ENCODE measurements at regions of chr5 and their contacts with region 1.

Region 1: DNA sequence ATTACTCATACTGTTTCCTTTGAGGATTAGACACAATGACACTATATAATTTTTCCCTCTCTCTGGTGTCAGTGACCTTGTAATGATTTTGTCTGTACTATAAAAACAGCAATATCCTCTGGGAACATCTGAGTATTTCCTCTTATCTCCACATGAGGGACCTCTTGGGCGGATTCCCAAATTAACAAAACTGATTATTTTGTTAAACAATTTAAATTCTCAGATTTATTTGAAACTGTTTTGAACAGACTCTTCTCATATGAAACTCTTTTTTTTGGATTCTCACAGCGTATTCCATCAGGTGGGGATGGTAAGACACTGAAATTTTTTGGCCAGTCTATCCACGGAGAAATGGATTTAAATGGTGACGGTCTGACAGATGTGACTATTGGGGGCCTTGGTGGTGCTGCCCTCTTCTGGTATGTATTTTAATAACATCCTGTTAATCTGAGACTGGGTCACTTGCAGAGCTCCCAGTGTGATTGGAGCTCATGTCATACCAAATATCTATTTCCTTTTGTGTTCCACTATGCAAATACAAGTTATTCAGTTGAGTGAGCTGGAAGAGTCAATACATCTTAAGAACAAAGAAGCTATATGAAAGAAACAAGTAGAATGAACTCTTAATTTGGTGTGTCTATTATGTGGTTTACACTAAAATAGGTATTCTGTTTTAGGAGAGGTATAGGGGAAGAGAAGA is 73.8 kb upstream of the ITGA2 start:
- DNase-seq: no peak
- ATAC-seq: peak; percentile 94

Region 2: GRCh38 chr5:52799983-52800393 is 115.3 kb before region 1 on chr5:
- intact Hi-C with region 1: loop called (anchors 10 kb)
- DNase-seq: peak; percentile 98
- ATAC-seq: peak; percentile 97

Region 3: DNA sequence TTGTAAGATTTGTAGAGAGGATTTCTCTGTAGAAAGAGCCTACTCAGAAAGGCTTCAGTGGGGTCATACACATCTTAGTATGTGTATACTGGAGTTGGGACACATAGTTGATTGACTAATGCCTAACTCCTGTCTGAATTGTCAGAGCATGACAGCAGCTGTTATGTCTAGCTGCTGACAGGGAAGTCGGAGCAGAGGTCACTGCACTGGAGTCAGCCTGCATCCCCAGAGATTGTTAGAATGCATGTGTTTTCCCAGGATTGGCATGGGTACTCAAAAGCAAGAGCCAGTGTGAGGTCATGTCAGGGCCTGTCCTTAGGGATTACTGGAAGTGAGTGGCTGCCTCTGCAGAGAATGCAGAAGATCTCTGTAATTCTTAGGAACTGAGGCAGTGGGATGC is 44.9 kb before region 1 on chr5:
- intact Hi-C with region 1: no loop called
- DNase-seq: no peak
- ATAC-seq: peak; percentile 71

Region 4: DNA sequence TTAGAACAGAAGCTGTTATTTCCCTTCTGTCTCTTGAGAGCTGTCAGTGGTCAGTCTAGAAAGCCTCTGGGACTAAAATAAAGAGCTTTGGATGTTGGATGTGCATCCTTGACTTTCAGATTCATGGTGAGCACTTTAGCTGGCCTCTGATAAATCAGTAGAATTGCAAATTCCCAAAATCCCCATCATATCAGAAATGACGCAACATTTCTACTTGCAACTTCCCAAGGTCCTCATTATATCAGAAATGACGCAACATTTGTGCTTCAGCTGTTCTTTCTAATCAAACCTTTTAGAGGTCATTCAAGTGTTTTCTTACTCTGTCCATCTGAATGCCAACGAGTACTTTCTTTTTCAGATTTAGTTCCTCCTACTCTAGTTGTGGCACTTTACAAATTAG is 361.5 kb after region 1 on chr5:
- intact Hi-C with region 1: no loop called
- DNase-seq: no peak
- ATAC-seq: peak; percentile 90

Measured in sciatic nerve (tissue), 2 donors.